ENCODE measurements at regions of chr2 and their contacts with region 1.

Region 1: DNA sequence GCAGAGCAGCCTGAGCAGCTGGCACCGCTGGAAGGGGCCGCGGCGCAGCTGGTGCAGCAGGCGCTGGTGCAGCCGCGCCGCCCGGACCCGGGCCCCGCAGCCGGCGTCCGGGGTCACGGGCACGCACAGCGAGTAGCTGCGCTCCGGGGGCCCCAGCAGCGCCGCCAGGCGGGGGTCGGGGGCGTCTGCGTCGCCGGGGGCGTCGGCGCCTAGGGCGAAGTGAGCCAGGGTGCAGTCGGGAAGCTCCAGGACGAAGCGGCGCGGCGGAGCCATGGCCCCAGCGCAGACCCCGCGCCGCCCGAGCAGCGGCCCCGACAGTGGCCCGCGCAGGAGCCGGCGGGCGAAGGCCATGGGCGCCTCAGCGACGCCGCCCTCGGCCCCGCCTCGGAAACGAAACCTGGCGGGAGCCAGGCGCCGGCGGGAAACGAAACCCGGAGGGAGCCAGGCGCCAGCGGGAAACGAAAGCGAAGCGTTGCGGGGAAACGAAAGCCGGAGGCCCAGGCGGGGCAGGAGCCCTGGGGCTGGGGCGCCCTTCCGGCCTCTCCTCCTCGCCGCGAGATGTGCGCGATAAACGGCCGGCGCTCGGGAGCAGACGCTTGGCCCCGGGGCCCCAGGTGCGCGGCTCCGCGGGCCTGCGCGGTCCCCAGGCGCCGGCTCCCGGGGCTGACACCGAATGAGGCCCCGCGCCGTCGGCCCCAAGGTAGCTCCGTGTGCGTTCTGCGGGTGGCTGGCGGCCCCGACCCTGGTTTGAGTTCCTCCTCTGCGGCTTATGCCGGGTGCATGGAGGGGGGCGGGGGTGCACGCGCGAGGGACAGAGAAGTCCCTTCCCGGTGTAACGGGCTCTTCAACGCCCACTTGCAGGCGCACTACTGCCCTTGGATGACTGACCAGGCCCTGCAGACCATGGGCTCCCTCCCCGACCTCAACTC is at the start of gene CMPK2:
- DNase-seq: peak; percentile 80
- ATAC-seq: peak; percentile 74
- H3K4me3 ChIP-seq: peak within 1 kb of the TSS in 4 of 5 experiments; percentile 64 to 75 (median 72)
- H3K4me3 Mint-ChIP-seq: peak within 1 kb of the TSS; percentile 94
- H3K27ac ChIP-seq: peak within 1 kb of the TSS in 1 of 2 donors; percentile 27
- H3K27ac Mint-ChIP-seq: peak within 1 kb of the TSS; percentile 81
- H3K4me1 ChIP-seq: peaks cover 9 to 13% of the 10 kb centered on the region in 2 donors
- H3K4me1 Mint-ChIP-seq: peaks cover 13% of the 10 kb centered on the region
- H3K27me3 ChIP-seq: no peaks in the 10 kb centered on the region
- H3K27me3 Mint-ChIP-seq: no peaks in the 10 kb centered on the region
- CTCF ChIP-seq: peak; percentile 34
- total RNA-seq, gene CMPK2: 2.0 and 2.9 TPM in 2 replicates

Region 2: DNA sequence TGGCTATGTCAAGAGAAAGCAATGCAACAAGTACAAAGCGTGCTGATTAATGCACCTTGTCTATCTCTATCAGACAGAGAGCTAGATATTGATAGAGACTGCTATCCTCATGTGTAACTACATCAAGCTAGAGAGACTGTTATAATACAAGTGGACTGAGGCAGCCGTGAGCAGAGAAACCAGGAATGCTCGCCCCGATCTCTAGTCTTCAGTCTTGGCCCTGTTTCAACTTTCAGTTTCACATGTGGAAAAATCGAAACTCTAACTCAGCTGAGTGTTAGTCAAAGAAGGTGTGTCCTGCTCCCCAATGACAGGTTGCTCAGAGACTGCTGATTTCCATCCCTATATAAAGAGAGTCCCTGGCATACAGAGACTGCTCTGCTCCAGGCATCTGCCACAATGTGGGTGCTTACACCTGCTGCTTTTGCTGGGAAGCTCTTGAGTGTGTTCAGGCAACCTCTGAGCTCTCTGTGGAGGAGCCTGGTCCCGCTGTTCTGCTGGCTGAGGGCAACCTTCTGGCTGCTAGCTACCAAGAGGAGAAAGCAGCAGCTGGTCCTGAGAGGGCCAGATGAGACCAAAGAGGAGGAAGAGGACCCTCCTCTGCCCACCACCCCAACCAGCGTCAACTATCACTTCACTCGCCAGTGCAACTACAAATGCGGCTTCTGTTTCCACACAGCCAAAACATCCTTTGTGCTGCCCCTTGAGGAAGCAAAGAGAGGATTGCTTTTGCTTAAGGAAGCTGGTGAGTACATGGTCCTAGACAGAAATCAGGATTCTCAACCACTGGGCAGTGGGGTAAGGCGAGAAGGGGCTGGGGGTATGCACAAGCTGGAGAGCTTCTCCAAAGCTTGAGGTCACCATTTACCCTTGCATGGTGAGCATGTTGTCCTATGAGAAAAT is 12.0 kb after region 1 on chr2 and contains the start of gene RSAD2:
- CTCF ChIA-PET with region 1: interaction called, 8 read pairs
- POLR2A ChIA-PET with region 1: interaction called, 3 read pairs
- intact Hi-C with region 1: loop called (anchors 1 kb)
- DNase-seq: peak; percentile 49
- ATAC-seq: peak; percentile 81
- H3K4me3 ChIP-seq: peak within 1 kb of the TSS; percentile 22 to 54 (median 52)
- H3K4me3 Mint-ChIP-seq: peak within 1 kb of the TSS; percentile 86
- H3K27ac ChIP-seq: peak within 1 kb of the TSS in 1 of 2 donors; percentile 26
- H3K27ac Mint-ChIP-seq: peak within 1 kb of the TSS; percentile 16
- H3K4me1 ChIP-seq: peaks cover 14 to 18% of the 10 kb centered on the region in 2 donors
- H3K4me1 Mint-ChIP-seq: peaks cover 32% of the 10 kb centered on the region
- H3K27me3 ChIP-seq: peaks cover 0 to 6% (median 3%) of the 10 kb centered on the region in 4 experiments
- H3K27me3 Mint-ChIP-seq: peaks cover 7% of the 10 kb centered on the region
- CTCF ChIP-seq: no peak
- total RNA-seq, gene RSAD2: 1.5 and 2.0 TPM in 2 replicates

Region 3: GRCh38 chr2:6917071-6917760 is 51.6 kb after region 1 on chr2 and contains the start of gene RNF144A:
- CTCF ChIA-PET with region 1: interaction called, 5 read pairs
- POLR2A ChIA-PET with region 1: no interaction called
- intact Hi-C with region 1: loop called (anchors 5 kb)
- DNase-seq: peak; percentile 77
- ATAC-seq: peak; percentile 94
- H3K4me3 ChIP-seq: peak within 1 kb of the TSS in 4 of 5 experiments; percentile 25 to 57 (median 48)
- H3K4me3 Mint-ChIP-seq: peak within 1 kb of the TSS; percentile 78
- H3K27ac ChIP-seq: no peak within 1 kb of the TSS
- H3K27ac Mint-ChIP-seq: peak within 1 kb of the TSS; percentile 10
- H3K4me1 ChIP-seq: peaks cover 7 to 13% of the 10 kb centered on the region in 2 donors
- H3K4me1 Mint-ChIP-seq: peaks cover 5% of the 10 kb centered on the region
- H3K27me3 ChIP-seq: peaks cover 0 to 17% (median 4%) of the 10 kb centered on the region in 4 experiments
- H3K27me3 Mint-ChIP-seq: peaks cover 8% of the 10 kb centered on the region
- CTCF ChIP-seq: peak; percentile 52
- total RNA-seq, gene RNF144A: 1.6 and 2.5 TPM in 2 replicates

Measured in B cell (primary cell).